ENCODE measurements at regions of chr2 and their contacts with region 1.

Region 1: GRCh38 chr2:236569573-236569973 is at the start of gene ACKR3:
- DNase-seq: peak; percentile 51 to 70
- H3K4me3 ChIP-seq: peak within 1 kb of the TSS; percentile 58
- H3K27ac ChIP-seq: no peak within 1 kb of the TSS
- H3K4me1 ChIP-seq: peaks cover 11% of the 10 kb centered on the region; the same call in 1 of the 2 replicates
- H3K27me3 ChIP-seq: peaks cover 53% of the 10 kb centered on the region
- CTCF ChIP-seq: peak; percentile 46; the same call in 1 of the 2 replicates
- total RNA-seq, gene ACKR3: 19.6 and 20.3 TPM in 2 replicates

Region 2: DNA sequence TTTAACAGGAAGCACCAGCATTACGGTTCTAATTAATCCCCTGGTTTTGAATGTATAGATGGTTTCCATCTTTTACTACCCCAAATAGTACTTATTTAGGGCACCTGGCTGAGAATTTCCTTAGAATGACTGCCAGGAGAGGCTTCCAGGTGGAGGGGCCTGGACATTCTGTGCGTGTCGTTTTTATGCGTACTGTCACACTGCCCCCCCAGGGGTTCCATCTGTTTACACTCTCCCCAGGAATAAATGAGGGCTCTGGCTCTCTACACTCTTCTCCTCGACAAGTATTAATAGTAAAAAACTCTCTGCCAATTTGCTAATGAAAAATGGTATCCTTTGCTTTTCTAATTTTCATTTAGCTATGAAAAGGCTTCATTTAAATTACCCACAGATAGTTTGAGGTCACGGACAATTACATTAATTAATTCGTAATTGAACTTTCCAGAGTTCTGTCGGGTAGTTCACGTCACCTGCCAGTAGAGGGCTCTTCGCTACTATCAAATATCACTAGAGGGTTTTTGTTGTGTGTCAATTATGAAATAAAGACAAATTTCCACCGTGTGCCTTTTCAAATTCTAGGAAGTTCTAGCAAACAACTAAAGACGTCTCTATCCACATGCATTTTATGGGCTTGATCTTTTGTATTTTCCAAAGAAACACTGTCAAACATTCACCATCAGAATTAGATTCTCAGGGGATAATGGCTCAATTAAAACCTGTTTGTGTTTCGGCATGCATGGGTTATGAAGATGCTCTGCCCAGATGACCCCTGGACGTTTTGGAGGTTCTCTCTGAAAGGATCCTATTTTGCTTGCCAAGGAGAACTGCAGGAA is 216.6 kb before region 1 on chr2:
- CTCF ChIA-PET with region 1: no interaction called
- POLR2A ChIA-PET with region 1: no interaction called
- intact Hi-C with region 1: loop called (anchors 2 kb)
- DNase-seq: peak in 1 of 2 experiments; percentile 27
- H3K4me3 ChIP-seq: no peak overlapping the region
- H3K27ac ChIP-seq: no peak overlapping the region
- H3K4me1 ChIP-seq: no peaks in the 10 kb centered on the region
- H3K27me3 ChIP-seq: peaks cover 48% of the 10 kb centered on the region
- CTCF ChIP-seq: peak; percentile 98

Region 3: GRCh38 chr2:236512902-236513435 is 56.6 kb before region 1 on chr2:
- CTCF ChIA-PET with region 1: interaction called, 12 read pairs
- POLR2A ChIA-PET with region 1: no interaction called
- intact Hi-C with region 1: loop called (anchors 5 kb)
- DNase-seq: peak; percentile 30 to 33
- H3K4me3 ChIP-seq: no peak overlapping the region
- H3K27ac ChIP-seq: no peak overlapping the region
- H3K4me1 ChIP-seq: no peaks in the 10 kb centered on the region
- H3K27me3 ChIP-seq: peaks cover 33% of the 10 kb centered on the region
- CTCF ChIP-seq: peak; percentile 72

Region 4: GRCh38 chr2:236579746-236580315 is 10.3 kb after region 1 on chr2:
- CTCF ChIA-PET with region 1: no interaction called
- POLR2A ChIA-PET with region 1: interaction called, 10 read pairs
- intact Hi-C with region 1: no loop called
- DNase-seq: no peak
- H3K4me3 ChIP-seq: no peak overlapping the region
- H3K27ac ChIP-seq: no peak overlapping the region
- H3K4me1 ChIP-seq: no peaks in the 10 kb centered on the region
- H3K27me3 ChIP-seq: peaks cover 62% of the 10 kb centered on the region
- CTCF ChIP-seq: no peak

Region 5: DNA sequence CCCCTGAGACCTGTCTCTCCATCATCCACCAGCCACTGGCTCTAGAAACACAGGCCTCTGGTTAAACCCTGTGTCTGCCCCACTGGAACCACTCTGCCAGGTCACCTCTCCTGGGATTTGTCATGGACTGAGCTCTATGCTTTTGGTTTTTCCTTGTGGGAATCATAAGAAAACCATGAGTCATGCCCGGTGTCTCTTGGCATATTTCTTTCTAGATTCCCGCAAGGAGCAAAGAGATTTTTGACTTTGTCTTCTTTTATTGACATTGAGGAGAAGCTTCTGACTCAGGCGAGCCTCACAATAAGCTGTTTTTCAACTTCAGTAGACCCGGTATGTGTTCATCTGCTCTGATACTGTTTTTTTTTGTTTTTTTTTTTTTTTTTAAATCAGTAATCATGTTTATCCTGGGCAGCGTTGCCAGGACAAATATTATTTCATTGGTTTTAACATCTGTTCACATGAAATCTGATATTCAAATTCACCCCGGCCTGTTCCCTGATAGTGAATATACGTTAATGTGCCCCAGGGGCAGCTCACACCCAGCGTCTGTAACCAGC is 207.2 kb after region 1 on chr2:
- CTCF ChIA-PET with region 1: no interaction called
- POLR2A ChIA-PET with region 1: no interaction called
- intact Hi-C with region 1: loop called (anchors 2 kb)
- DNase-seq: peak; percentile 49 to 81
- H3K4me3 ChIP-seq: no peak overlapping the region
- H3K27ac ChIP-seq: peak overlapping the region; percentile 81
- H3K4me1 ChIP-seq: peaks cover 35% of the 10 kb centered on the region
- H3K27me3 ChIP-seq: peaks cover 4% of the 10 kb centered on the region; the same call in 1 of the 2 replicates
- CTCF ChIP-seq: no peak